Activated CD4-positive, alpha-beta memory T cell treated with anti-CD3 and anti-CD28 coated beads for 36 hours (primary cell): ENCODE measurements at regions of chr11 and their contacts with region 1.

Region 1: GRCh38 chr11:119323538-119324033 is 6.7 kb upstream of the MCAM start:
- DNase-seq: peak; percentile 90
- H3K4me3 Mint-ChIP-seq: no peak overlapping the region
- H3K27ac Mint-ChIP-seq: no peak overlapping the region
- H3K4me1 Mint-ChIP-seq: peaks cover 20% of the 10 kb centered on the region
- H3K27me3 Mint-ChIP-seq: peaks cover 3% of the 10 kb centered on the region

Region 2: GRCh38 chr11:119101759-119102423 is 221.7 kb before region 1 on chr11 and contains the start of gene DPAGT1:
- CTCF ChIA-PET with region 1: interaction called, 7 read pairs
- POLR2A ChIA-PET with region 1: no interaction called
- intact Hi-C with region 1: loop called (anchors 2 kb)
- DNase-seq: peak; percentile 92
- H3K4me3 Mint-ChIP-seq: peak within 1 kb of the TSS; percentile 92
- H3K27ac Mint-ChIP-seq: peak within 1 kb of the TSS; percentile 92
- H3K4me1 Mint-ChIP-seq: peaks cover 33% of the 10 kb centered on the region
- H3K27me3 Mint-ChIP-seq: no peaks in the 10 kb centered on the region
- total RNA-seq, gene DPAGT1: 64.4 to 66.9 TPM

Region 3: GRCh38 chr11:119196833-119197483 is 126.6 kb before region 1 on chr11:
- CTCF ChIA-PET with region 1: interaction called, 21 read pairs
- POLR2A ChIA-PET with region 1: no interaction called
- intact Hi-C with region 1: no loop called
- DNase-seq: peak; percentile 72
- H3K4me3 Mint-ChIP-seq: no peak overlapping the region
- H3K27ac Mint-ChIP-seq: no peak overlapping the region
- H3K4me1 Mint-ChIP-seq: peaks cover 3% of the 10 kb centered on the region
- H3K27me3 Mint-ChIP-seq: no peaks in the 10 kb centered on the region

Region 4: GRCh38 chr11:119306373-119306890 is 17.2 kb before region 1 on chr11:
- CTCF ChIA-PET with region 1: interaction called, 26 read pairs
- POLR2A ChIA-PET with region 1: interaction called, 4 read pairs
- intact Hi-C with region 1: no loop called
- DNase-seq: peak; percentile 57
- H3K4me3 Mint-ChIP-seq: no peak overlapping the region
- H3K27ac Mint-ChIP-seq: peak overlapping the region; percentile 85
- H3K4me1 Mint-ChIP-seq: peaks cover 22% of the 10 kb centered on the region
- H3K27me3 Mint-ChIP-seq: no peaks in the 10 kb centered on the region

Region 5: DNA sequence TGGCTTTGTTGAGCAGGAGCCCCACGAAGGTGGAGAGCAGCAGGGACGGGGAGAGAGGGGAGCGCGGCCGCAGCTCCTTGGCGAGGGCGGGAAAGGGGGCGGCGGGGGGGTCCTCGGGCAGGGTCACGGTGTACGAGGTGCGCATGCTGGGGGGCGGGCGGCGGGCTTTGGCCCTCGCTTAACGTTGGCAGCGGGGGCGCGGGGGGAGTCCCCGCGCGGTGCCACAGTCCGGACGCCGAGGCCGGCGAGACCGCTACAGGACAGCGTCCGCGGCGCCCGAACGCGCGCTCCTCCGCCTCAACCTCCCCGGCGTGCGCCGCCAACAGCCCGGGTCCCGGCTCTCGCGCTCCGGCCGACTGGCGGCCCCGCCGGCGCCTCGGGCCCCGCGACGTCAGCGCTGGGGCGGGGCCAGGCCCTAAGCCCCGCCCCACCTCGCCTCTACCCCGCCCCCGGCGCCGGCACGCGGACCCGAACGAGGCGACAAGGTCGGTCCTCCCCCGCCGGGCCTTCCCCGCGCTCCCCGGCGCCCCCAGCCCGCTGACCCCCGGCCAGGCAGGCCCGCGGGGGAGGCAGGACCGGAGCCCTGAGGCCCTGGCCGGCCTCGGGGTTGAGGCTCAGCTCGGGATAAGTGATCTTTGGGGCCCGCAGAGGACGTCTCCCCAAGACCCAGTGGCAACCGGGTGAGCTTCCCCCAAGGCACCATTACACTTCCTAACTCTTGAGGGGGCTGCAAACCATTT is 40.4 kb after region 1 on chr11:
- CTCF ChIA-PET with region 1: interaction called, 5 read pairs
- POLR2A ChIA-PET with region 1: no interaction called
- intact Hi-C with region 1: loop called (anchors 5 kb)
- DNase-seq: peak; percentile 64
- H3K4me3 Mint-ChIP-seq: no peak overlapping the region
- H3K27ac Mint-ChIP-seq: no peak overlapping the region
- H3K4me1 Mint-ChIP-seq: peaks cover 34% of the 10 kb centered on the region
- H3K27me3 Mint-ChIP-seq: peaks cover 48% of the 10 kb centered on the region

Region 6: GRCh38 chr11:119406005-119406404 is 82.4 kb after region 1 on chr11:
- CTCF ChIA-PET with region 1: no interaction called
- POLR2A ChIA-PET with region 1: no interaction called
- intact Hi-C with region 1: no loop called
- DNase-seq: no peak
- H3K4me3 Mint-ChIP-seq: no peak overlapping the region
- H3K27ac Mint-ChIP-seq: no peak overlapping the region
- H3K4me1 Mint-ChIP-seq: no peaks in the 10 kb centered on the region
- H3K27me3 Mint-ChIP-seq: no peaks in the 10 kb centered on the region